Activated T-helper 1 cell treated with anti-CD3 and anti-CD28 coated beads, Interleukin-12 subunit alpha, Interleukin-12 subunit beta, Interleukin-2, Interleukin-4 antibody, amounts not matched to agents 30 ng/mL and 10 ng/mL and 1 ng/mL, durations not matched to agents 14 hours and 24 hours and 36 hours (primary cell): ENCODE measurements at regions of chr4 and their contacts with region 1.

Region 1: GRCh38 chr4:88823058-88823919 is 125.7 kb upstream of the NAP1L5 start:
- DNase-seq: peak; percentile 76
- H3K4me3 Mint-ChIP-seq: peak overlapping the region; percentile 95
- H3K27ac Mint-ChIP-seq: peak overlapping the region; percentile 99
- H3K4me1 Mint-ChIP-seq: peaks cover 48% of the 10 kb centered on the region
- H3K27me3 Mint-ChIP-seq: no peaks in the 10 kb centered on the region

Region 2: DNA sequence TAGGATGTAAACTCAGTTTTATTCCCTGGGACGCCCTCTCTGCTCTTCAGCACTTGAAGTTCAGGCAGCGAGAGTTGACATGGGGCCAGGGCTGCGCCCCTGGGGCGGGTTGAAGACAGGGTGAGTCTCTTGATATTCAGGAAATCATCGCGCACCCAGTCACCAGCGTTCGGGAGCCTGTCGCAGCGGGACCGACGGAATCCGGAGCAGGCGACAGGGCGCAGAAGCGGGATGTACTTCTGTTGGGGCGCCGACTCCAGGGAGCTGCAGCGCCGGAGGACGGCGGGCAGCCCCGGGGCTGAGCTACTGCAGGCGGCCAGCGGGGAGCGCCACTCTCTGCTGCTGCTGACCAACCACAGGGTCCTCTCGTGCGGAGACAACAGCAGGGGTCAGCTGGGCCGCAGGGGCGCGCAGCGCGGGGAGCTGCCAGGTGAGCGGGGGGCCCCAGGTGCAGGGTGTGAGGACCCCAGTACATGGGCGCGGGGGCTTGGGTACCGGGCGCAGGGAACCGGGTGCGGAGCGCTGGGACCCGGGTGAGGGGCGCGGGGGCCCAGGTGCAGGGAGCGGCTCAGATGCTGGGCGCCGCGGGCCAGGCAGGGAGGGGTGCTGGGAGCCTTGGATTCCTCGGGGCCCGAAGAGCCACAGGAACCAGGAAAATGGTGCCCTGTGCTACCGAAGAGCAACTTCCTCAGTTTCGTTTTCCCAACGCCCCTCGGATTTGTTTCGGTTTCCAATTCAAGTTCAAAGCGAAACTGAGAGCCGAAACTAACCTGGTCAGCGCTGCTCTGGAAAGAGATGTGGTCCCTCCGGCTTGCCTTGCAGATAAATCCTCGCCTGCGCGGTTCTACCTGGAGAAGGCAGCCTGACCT is 444.4 kb before region 1 on chr4 and contains the start of gene HERC6:
- intact Hi-C with region 1: loop called (anchors 10 kb)
- DNase-seq: peak; percentile 80
- H3K4me3 Mint-ChIP-seq: peak within 1 kb of the TSS; percentile 89
- H3K27ac Mint-ChIP-seq: peak within 1 kb of the TSS; percentile 81
- H3K4me1 Mint-ChIP-seq: peaks cover 47% of the 10 kb centered on the region
- H3K27me3 Mint-ChIP-seq: no peaks in the 10 kb centered on the region
- total RNA-seq, gene HERC6: 6.0 and 9.1 TPM in 2 replicates

Region 3: DNA sequence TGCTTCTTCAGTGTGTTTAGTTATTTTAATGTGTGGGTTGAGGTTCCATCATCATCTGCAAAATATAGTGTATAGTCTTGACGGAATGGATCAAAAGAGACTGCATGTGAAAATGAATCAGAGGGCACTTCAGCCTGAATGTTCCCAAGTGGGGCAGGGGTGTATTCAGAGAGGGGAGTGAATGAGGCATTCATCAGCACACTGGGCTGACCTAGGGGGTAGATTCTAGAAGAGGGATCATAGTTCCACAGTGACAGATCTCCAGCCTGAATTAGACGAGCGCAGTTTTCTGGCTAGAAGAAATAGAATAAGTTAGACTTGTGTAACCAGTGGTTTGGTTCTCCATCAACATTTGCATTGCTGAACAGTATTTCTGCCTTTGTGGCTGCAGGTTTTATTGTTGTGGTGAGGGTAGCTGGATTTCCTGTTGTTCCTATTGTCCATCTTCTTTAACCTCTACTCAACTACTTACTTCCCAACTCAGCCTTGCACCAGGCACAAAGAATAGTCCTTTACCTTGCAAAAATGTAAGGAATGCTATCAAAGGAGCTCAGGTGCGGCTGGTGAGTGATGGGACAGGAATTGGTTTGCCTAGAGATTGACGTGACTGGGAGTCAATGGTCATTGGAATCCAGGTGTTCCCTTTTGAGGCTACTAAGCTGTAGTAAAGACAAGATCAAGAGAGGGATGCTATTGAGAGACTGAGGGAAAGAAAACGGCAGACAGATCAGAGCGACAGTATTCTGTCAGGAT is 176.6 kb before region 1 on chr4:
- intact Hi-C with region 1: no loop called
- DNase-seq: no peak
- H3K4me3 Mint-ChIP-seq: no peak overlapping the region
- H3K27ac Mint-ChIP-seq: no peak overlapping the region
- H3K4me1 Mint-ChIP-seq: peaks cover 6% of the 10 kb centered on the region
- H3K27me3 Mint-ChIP-seq: no peaks in the 10 kb centered on the region

Region 4: GRCh38 chr4:88672987-88673386 is 150.3 kb before region 1 on chr4:
- intact Hi-C with region 1: loop called (anchors 5 kb)
- DNase-seq: no peak
- H3K4me3 Mint-ChIP-seq: no peak overlapping the region
- H3K27ac Mint-ChIP-seq: no peak overlapping the region
- H3K4me1 Mint-ChIP-seq: no peaks in the 10 kb centered on the region
- H3K27me3 Mint-ChIP-seq: no peaks in the 10 kb centered on the region

Region 5: GRCh38 chr4:88743696-88744095 is 79.6 kb before region 1 on chr4:
- intact Hi-C with region 1: no loop called
- DNase-seq: no peak
- H3K4me3 Mint-ChIP-seq: no peak overlapping the region
- H3K27ac Mint-ChIP-seq: no peak overlapping the region
- H3K4me1 Mint-ChIP-seq: no peaks in the 10 kb centered on the region
- H3K27me3 Mint-ChIP-seq: no peaks in the 10 kb centered on the region

Region 6: DNA sequence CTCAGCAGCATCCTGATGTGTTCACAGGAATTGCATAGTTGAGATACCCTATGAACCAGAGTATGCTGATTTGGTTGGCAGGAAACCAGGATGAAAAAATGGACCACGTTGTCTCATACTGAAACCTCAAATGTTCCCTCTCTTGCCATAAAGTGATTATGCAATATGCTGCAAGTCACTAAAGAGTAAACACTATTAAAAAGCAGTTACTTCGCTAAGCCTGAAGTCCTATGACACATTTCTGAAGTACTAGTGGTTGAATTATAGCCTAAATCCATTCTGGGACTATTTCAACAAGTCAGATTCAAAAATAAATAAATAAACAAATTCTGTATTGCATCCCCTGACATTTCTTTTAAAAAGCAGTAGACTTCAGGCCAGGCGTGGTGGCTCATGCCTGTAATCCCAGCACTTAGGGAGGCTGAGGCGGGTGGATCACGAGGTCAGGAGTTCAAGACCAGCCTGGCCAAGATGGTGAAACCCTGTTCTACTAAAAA is 19.6 kb before region 1 on chr4:
- intact Hi-C with region 1: loop called (anchors 1 kb)
- DNase-seq: peak; percentile 17
- H3K4me3 Mint-ChIP-seq: no peak overlapping the region
- H3K27ac Mint-ChIP-seq: no peak overlapping the region
- H3K4me1 Mint-ChIP-seq: peaks cover 13% of the 10 kb centered on the region
- H3K27me3 Mint-ChIP-seq: peaks cover 16% of the 10 kb centered on the region

Region 7: DNA sequence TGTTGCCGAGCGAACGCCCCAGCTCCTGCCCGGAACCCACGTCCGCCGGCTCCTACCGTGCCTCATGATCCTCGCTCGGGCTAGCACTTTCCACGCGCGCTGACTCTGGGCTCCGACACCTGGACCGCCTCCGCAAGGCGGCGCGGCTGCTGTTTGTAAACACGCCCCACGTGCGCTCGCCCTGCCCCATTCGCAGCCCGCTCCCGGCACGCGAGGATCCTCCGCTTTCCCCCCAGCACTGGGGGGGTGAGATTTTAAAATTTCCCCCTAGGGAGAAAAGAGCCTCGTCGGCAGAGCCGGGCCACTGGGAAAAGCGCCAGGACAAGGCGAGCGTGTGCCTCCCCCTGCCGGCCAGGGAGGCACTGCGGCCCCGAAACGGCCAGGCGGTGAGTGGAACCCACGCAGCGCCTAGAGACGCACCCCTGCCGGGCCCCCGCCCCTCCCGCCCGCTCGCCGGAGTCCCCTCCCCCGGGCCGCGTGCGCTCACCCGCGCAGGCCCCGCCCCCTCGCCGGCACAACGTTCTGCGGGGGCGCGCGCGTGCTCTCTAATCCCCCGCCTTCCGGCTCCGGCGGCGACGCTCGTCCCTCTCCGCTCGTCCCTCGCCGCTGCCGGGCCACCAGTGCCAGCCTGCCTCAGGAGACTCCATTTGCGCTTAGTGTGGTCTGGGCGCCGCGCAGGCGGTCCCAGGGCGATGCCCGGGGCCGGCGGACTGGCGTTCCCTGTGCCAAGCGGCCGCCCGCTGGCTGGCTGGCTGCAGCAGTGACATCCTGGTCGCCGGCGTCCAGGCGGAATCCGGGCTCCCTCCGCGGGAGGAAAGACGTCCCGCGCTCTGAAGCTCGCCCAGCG is 287.9 kb after region 1 on chr4 and contains the start of gene TIGD2:
- intact Hi-C with region 1: loop called (anchors 1 kb)
- DNase-seq: peak; percentile 80
- H3K4me3 Mint-ChIP-seq: peak within 1 kb of the TSS; percentile 86
- H3K27ac Mint-ChIP-seq: peak within 1 kb of the TSS; percentile 71
- H3K4me1 Mint-ChIP-seq: peaks cover 27% of the 10 kb centered on the region
- H3K27me3 Mint-ChIP-seq: peaks cover 20% of the 10 kb centered on the region
- total RNA-seq, gene TIGD2: 2.0 and 2.3 TPM in 2 replicates